Heart left ventricle (tissue), 16 donors: ENCODE measurements at regions of chr14 and their contacts with region 1.

Region 1: DNA sequence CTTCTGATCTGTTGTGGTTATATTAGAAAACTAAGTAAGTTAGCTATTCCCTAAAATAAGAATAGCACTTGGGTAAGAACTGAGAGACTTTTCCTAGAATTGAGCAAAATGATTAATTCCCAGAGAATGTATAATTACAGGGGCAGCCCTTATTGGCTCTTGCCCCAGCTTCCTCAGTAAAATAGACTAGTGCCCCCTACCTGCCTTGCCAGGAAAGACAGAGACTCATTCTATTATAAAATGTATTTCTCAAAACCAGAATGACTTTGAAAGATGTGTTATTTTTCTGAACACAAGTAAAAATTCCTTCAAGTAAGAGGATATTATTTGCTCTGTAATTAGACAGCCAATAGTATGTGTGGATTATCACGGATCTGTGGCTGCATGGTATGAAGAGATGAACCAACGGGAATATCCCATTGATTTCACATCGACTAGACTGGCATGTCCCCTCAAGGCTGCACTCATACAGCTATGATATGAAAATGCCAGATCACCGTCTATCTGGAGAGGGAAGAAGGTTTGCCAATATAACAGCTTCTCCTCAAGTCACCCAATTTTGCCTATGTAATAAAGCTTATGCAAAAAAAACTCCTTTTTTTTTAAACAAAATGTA is 7.4 kb upstream of the GLRX5 start:
- DNase-seq: peak in 2 of 5 donors; percentile 56 to 59
- ATAC-seq: peak in 3 of 4 donors; percentile 43 to 63 (median 62)
- H3K4me3 ChIP-seq: peak overlapping the region in 1 of 12 donors; percentile 2
- H3K27ac ChIP-seq: peak overlapping the region in 8 of 12 donors; percentile 29 to 77 (median 56)
- H3K4me1 ChIP-seq: peaks cover 3 to 71% (median 48%) of the 10 kb centered on the region in 12 donors
- H3K27me3 ChIP-seq: no peaks in the 10 kb centered on the region
- CTCF ChIP-seq: peak; percentile 75 to 92 (median 82)
- POLR2A ChIP-seq: no peak

Region 2: GRCh38 chr14:95442633-95443021 is 84.9 kb before region 1 on chr14:
- intact Hi-C with region 1: loop called (anchors 1 to 2 kb)
- DNase-seq: peak; percentile 76 to 84 (median 83)
- ATAC-seq: peak; percentile 90 to 98 (median 94)
- H3K4me3 ChIP-seq: no peak overlapping the region
- H3K27ac ChIP-seq: no peak overlapping the region
- H3K4me1 ChIP-seq: peaks cover 0 to 5% (median 0%) of the 10 kb centered on the region in 12 donors
- H3K27me3 ChIP-seq: no peaks in the 10 kb centered on the region
- CTCF ChIP-seq: peak; percentile 79 to 95 (median 86)
- POLR2A ChIP-seq: no peak

Region 3: DNA sequence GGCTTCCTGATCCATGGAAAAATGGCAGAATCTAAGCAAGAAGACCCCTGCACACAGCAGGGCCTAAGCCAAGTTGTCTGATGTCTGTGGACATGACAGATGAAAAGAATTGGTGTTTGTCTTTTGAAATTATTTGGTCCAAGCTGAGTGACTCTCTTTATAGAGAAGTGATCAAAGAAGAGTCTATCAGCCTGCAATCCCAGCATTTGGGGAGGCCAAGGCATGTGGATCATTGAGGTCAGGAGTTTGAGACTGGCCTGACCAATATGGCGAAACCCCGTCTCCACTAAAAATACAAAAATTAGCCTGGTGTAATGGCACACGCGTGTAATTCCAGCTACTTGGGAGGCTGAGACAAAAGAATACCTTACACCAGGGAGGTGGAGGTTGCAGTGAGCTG is 284.3 kb after region 1 on chr14:
- intact Hi-C with region 1: no loop called
- DNase-seq: no peak
- ATAC-seq: no peak
- H3K4me3 ChIP-seq: no peak overlapping the region
- H3K27ac ChIP-seq: no peak overlapping the region
- H3K4me1 ChIP-seq: no peaks in the 10 kb centered on the region
- H3K27me3 ChIP-seq: peaks cover 0 to 30% (median 6%) of the 10 kb centered on the region in 9 donors
- CTCF ChIP-seq: no peak
- POLR2A ChIP-seq: no peak